Astrocyte of the cerebellum (primary cell): ENCODE measurements at regions of chr10 and their contacts with region 1.

Region 1: DNA sequence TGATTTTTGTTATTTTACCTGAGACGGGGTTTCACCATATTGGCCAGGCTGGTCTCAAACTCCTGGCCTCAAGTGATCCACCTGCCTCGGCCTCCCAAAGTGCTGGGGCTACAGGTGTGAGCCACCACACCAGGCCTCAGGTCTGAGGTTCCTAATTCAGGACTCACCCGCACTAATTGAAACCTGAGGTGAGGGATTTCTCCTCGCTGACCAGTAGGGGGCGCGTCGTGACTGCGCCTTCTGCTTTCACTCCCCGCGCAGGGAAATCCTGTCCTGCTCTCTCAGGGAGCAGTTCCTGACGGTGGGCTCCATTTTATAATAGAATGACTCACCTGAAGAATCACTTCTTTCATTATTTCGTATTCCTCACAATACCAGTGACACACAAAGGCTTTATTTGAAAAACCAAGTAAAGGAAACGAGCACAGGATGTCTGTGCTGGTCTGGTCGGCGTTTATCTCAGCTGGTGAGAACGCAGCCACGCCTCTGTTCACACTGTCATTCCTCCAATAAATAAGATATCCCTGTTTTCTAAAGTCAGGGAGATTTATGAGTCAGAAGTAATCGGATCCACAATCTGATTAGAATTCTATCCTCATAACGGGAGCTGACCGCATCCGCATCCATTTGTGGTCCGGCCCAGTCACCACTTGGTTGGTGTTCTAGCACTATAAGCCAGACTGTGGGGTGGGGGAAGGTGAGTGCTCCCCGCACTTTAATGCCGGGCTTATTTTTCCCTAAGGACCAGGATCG is 35.4 kb downstream of the BAG3 start:
- DNase-seq: peak; percentile 88
- H3K4me3 ChIP-seq: peak overlapping the region; percentile 38
- CTCF ChIP-seq: peak; percentile 77

Region 2: GRCh38 chr10:119747940-119748339 is 61.3 kb after region 1 on chr10:
- in situ Hi-C with region 1: loop called (anchors 5 kb)
- DNase-seq: no peak
- H3K4me3 ChIP-seq: no peak overlapping the region
- CTCF ChIP-seq: no peak

Region 3: GRCh38 chr10:119849031-119849789 is 162.6 kb after region 1 on chr10:
- in situ Hi-C with region 1: loop called (anchors 5 kb)
- DNase-seq: peak; percentile 61
- H3K4me3 ChIP-seq: no peak overlapping the region
- CTCF ChIP-seq: no peak